GM12878 (cell line): ENCODE measurements at regions of chr2 and their contacts with region 1.

Region 1: DNA sequence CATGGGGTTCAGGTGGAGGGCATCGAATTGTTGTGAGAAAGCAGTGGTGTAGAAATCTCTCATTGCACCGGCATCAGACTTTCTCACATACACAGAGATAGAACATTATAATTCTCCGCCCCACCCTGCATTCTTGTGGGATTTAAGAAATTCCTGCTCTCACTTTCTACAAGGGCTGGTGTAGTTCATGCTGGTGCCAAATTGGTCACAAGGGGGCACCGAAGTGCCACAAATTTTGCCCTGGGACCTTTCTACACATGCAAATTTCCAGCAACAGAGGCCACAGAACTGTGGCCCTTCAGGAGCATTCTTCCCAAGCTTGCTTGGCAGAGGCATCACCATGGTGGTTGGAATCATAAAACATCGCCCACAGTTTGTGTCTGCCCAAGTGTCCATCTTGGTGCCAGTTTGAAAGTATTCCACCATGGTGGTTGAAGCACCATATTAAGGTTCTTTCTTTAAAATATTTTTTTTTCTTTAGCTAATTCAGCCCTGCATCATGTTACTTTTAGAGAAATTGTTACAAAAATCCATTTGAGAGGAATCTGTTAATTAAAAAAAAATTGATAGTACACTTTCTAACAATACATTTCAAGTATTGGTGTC is 521.2 kb upstream of the FANCL start:
- DNase-seq: no peak
- ATAC-seq: peak; percentile 87
- H3K4me3 ChIP-seq: no peak overlapping the region
- H3K27ac ChIP-seq: no peak overlapping the region
- H3K4me1 ChIP-seq: no peaks in the 10 kb centered on the region
- H3K27me3 ChIP-seq: no peaks in the 10 kb centered on the region; a peak in 1 of 4 replicates
- CTCF ChIP-seq: peak; percentile 58 to 68 (median 62); a peak in 5 of 6 replicates
- EP300 ChIP-seq: no peak
- POLR2A ChIP-seq: no peak
- RAD21 ChIP-seq: peak; percentile 80

Region 2: GRCh38 chr2:58720033-58720769 is 42.1 kb before region 1 on chr2:
- CTCF ChIA-PET with region 1: no interaction called
- POLR2A ChIA-PET with region 1: no interaction called
- RAD21 ChIA-PET with region 1: no interaction called
- SMC1A ChIA-PET with region 1: no interaction called
- in situ Hi-C with region 1: no loop called
- intact Hi-C with region 1: no loop called
- DNase-seq: no peak
- ATAC-seq: no peak
- H3K4me3 ChIP-seq: no peak overlapping the region
- H3K27ac ChIP-seq: no peak overlapping the region
- H3K4me1 ChIP-seq: no peaks in the 10 kb centered on the region
- H3K27me3 ChIP-seq: no peaks in the 10 kb centered on the region; a peak in 1 of 4 replicates
- CTCF ChIP-seq: no peak
- EP300 ChIP-seq: no peak
- POLR2A ChIP-seq: no peak
- RAD21 ChIP-seq: no peak

Region 3: DNA sequence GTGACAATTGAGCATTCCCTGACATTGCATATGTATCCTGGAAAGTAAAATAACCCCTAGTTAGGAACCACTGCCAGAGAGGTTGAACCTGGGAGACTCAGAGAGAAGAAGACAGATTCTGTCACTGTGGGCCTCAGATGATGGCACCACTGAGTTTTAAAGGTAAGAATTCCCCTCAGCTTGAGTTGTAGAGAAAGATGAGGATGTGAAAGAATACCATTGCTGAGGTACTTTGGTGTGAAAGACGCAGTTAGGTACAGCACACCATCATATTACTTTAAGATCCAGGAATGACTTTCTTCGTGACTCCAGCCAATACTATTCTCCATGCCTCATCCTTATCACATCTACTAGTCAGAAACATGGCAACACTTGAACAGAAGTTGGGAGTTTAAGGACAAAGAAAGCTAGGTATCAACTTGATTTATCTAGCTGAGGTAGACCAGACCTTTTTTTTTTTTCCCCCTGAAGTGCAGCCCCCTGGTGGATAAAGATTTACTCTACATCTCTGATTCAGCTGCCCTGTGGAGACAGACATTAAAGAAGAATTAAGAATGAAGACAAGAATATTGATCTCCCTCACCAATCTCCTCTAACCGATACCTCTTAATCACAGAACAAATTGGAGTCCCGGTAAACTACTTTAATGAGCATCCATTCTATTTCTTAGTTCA is 109.3 kb after region 1 on chr2:
- CTCF ChIA-PET with region 1: interaction called, 4 read pairs
- POLR2A ChIA-PET with region 1: no interaction called
- RAD21 ChIA-PET with region 1: interaction called, 4 read pairs
- SMC1A ChIA-PET with region 1: no interaction called
- in situ Hi-C with region 1: no loop called
- intact Hi-C with region 1: loop called (anchors 1 kb)
- DNase-seq: no peak
- ATAC-seq: peak; percentile 73
- H3K4me3 ChIP-seq: no peak overlapping the region
- H3K27ac ChIP-seq: no peak overlapping the region
- H3K4me1 ChIP-seq: no peaks in the 10 kb centered on the region
- H3K27me3 ChIP-seq: no peaks in the 10 kb centered on the region
- CTCF ChIP-seq: peak; percentile 10 to 29 (median 21); a peak in 3 of 6 replicates
- EP300 ChIP-seq: no peak
- POLR2A ChIP-seq: no peak
- RAD21 ChIP-seq: peak; percentile 48

Region 4: DNA sequence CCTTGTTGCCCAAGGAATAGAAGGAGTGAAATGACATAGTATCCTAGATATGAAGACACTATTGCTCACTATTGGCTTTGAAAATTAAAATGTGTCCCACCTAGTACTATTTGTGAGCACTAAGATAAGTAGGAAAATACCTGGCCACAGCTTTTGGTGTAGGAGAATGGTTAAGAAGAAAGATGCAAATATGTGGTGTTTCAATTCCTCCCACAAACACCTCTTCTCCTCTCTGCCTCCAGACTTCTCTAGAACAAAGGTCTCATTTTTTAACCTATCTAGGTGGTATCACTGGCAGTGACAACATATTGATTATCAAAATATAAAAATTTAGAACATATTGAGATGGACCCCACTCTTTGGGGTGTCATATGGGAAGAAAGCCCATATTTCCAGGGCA is 408.7 kb after region 1 on chr2:
- CTCF ChIA-PET with region 1: no interaction called
- POLR2A ChIA-PET with region 1: no interaction called
- RAD21 ChIA-PET with region 1: no interaction called
- SMC1A ChIA-PET with region 1: no interaction called
- in situ Hi-C with region 1: no loop called
- intact Hi-C with region 1: loop called (anchors 5 kb)
- DNase-seq: no peak
- ATAC-seq: 0 out of 3 replicates have a peak, but pooled peaks have one; percentile 27
- H3K4me3 ChIP-seq: no peak overlapping the region
- H3K27ac ChIP-seq: no peak overlapping the region
- H3K4me1 ChIP-seq: no peaks in the 10 kb centered on the region; the same call in 1 of the 2 replicates
- H3K27me3 ChIP-seq: no peaks in the 10 kb centered on the region; a peak in 1 of 4 replicates
- CTCF ChIP-seq: no peak
- EP300 ChIP-seq: no peak
- POLR2A ChIP-seq: no peak
- RAD21 ChIP-seq: no peak

Region 5: GRCh38 chr2:60581433-60582282 is 1819.4 kb after region 1 on chr2:
- CTCF ChIA-PET with region 1: no interaction called
- POLR2A ChIA-PET with region 1: no interaction called
- RAD21 ChIA-PET with region 1: no interaction called
- SMC1A ChIA-PET with region 1: no interaction called
- in situ Hi-C with region 1: loop called (anchors 25 kb)
- intact Hi-C with region 1: loop called (anchors 10 kb)
- DNase-seq: no peak
- ATAC-seq: peak; percentile 99
- H3K4me3 ChIP-seq: no peak overlapping the region
- H3K27ac ChIP-seq: no peak overlapping the region
- H3K4me1 ChIP-seq: no peaks in the 10 kb centered on the region
- H3K27me3 ChIP-seq: no peaks in the 10 kb centered on the region; a peak in 3 of 4 replicates
- CTCF ChIP-seq: peak; percentile 93 to 94 (median 94); a peak in 5 of 6 replicates
- EP300 ChIP-seq: no peak
- POLR2A ChIP-seq: no peak
- RAD21 ChIP-seq: peak; percentile 90